Ovary (tissue), 10 donors: ENCODE measurements at regions of chr20 and their contacts with region 1.

Region 1: DNA sequence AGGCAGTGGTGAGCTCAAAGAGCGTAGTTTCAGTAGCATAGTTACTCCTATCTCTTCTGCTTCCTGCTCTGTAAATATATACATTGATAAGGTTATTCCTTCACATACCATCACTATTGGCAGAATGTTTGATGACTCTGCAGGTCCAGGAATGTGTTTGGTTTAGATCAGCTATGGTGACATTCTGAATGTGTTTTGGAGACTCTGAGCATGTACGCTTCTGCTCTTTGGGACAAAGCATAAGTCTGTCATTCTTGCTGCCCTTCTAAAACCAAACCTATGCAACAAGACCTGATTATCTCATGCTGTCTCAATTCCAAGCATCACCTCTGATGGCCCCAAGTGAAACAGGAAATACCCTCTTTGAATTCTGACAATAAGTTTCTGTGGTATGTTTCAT is 1074.3 kb downstream of the KIF16B start:
- DNase-seq: no peak
- H3K4me3 ChIP-seq: no peak overlapping the region
- H3K27ac ChIP-seq: no peak overlapping the region
- H3K4me1 ChIP-seq: no peaks in the 10 kb centered on the region
- H3K27me3 ChIP-seq: no peaks in the 10 kb centered on the region
- CTCF ChIP-seq: no peak
- EP300 ChIP-seq: no peak
- POLR2A ChIP-seq: no peak

Region 2: GRCh38 chr20:15515691-15516090 is 16.8 kb after region 1 on chr20:
- intact Hi-C with region 1: loop called in 1 of 4 experiments (anchors 1 kb)
- DNase-seq: no peak
- H3K4me3 ChIP-seq: no peak overlapping the region
- H3K27ac ChIP-seq: no peak overlapping the region
- H3K4me1 ChIP-seq: no peaks in the 10 kb centered on the region
- H3K27me3 ChIP-seq: no peaks in the 10 kb centered on the region
- CTCF ChIP-seq: no peak
- EP300 ChIP-seq: no peak
- POLR2A ChIP-seq: no peak